ENCODE measurements at regions of chr2 and their contacts with region 1.

Region 1: GRCh38 chr2:131492418-131493198 is 411 bp upstream of the MZT2A start:
- DNase-seq: peak; percentile 93
- ATAC-seq: peak; percentile 84
- H3K4me3 ChIP-seq: peak overlapping the region; percentile 90
- H3K27ac ChIP-seq: peak overlapping the region; percentile 86
- H3K4me1 ChIP-seq: peaks cover 9% of the 10 kb centered on the region
- H3K27me3 ChIP-seq: no peaks in the 10 kb centered on the region
- CTCF ChIP-seq: peak; percentile 61 to 80 (median 77)
- EP300 ChIP-seq: no peak
- POLR2A ChIP-seq: peak; percentile 78
- RAD21 ChIP-seq: peak; percentile 48

Region 2: DNA sequence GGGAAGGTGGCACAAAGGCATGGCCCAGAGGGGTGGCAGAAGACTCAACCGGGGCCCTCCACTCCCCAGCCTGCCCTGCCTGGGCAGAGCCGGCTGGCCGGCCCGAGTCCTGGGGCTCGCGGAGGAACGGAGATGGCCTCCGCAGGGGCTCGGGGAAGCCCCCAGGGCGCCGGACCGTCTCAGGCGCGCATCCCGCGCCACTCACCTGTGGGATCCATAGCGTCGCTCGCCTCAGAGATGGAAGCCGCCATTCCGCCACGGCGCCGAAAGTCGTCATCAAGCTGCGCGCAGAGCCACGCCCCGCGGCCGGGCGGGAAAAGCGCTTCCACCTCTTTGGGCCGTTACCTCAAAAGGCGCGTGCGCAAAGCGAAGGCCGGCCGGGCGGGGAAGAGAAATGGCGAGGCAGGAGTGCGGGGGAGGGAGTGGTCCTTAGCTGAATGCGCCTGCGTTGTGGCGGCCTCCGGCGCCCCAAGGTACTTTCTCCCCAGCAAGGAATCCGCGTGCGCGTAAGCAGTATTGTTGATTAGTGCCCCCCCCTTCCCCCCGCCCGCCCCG is 1311.2 kb before region 1 on chr2 and contains the start of gene SMPD4:
- CTCF ChIA-PET with region 1: no interaction called
- POLR2A ChIA-PET with region 1: no interaction called
- RAD21 ChIA-PET with region 1: no interaction called
- SMC1A ChIA-PET with region 1: interaction called, 3 read pairs
- in situ Hi-C with region 1: loop called (anchors 5 kb)
- intact Hi-C with region 1: no loop called
- DNase-seq: peak; percentile 80
- ATAC-seq: peak; percentile 83
- H3K4me3 ChIP-seq: peak within 1 kb of the TSS; percentile 75
- H3K27ac ChIP-seq: peak within 1 kb of the TSS; percentile 80
- H3K4me1 ChIP-seq: no peaks in the 10 kb centered on the region; the same call in 1 of the 2 replicates
- H3K27me3 ChIP-seq: no peaks in the 10 kb centered on the region
- CTCF ChIP-seq: no peak
- EP300 ChIP-seq: no peak
- POLR2A ChIP-seq: peak; percentile 69
- RAD21 ChIP-seq: no peak
- polyA plus RNA-seq, gene SMPD4: 5.0 to 10.4 TPM

Region 3: GRCh38 chr2:130756053-130756873 is 736.3 kb before region 1 on chr2:
- CTCF ChIA-PET with region 1: no interaction called
- POLR2A ChIA-PET with region 1: no interaction called
- RAD21 ChIA-PET with region 1: no interaction called
- SMC1A ChIA-PET with region 1: no interaction called
- in situ Hi-C with region 1: no loop called
- intact Hi-C with region 1: no loop called
- DNase-seq: no peak
- ATAC-seq: peak; percentile 72
- H3K4me3 ChIP-seq: no peak overlapping the region
- H3K27ac ChIP-seq: no peak overlapping the region
- H3K4me1 ChIP-seq: no peaks in the 10 kb centered on the region
- H3K27me3 ChIP-seq: peaks cover 3 to 5% of the 10 kb centered on the region in 2 experiments
- CTCF ChIP-seq: no peak
- EP300 ChIP-seq: no peak
- POLR2A ChIP-seq: no peak
- RAD21 ChIP-seq: no peak

Region 4: GRCh38 chr2:131093006-131093695 is 399.5 kb before region 1 on chr2 and contains the start of gene FAM168B:
- CTCF ChIA-PET with region 1: no interaction called
- POLR2A ChIA-PET with region 1: no interaction called
- RAD21 ChIA-PET with region 1: no interaction called
- SMC1A ChIA-PET with region 1: no interaction called
- in situ Hi-C with region 1: no loop called
- intact Hi-C with region 1: loop called (anchors 10 kb)
- DNase-seq: peak; percentile 27
- ATAC-seq: peak; percentile 87
- H3K4me3 ChIP-seq: peak within 1 kb of the TSS; percentile 90
- H3K27ac ChIP-seq: peak within 1 kb of the TSS; percentile 89
- H3K4me1 ChIP-seq: peaks cover 3% of the 10 kb centered on the region; the same call in 1 of the 2 replicates
- H3K27me3 ChIP-seq: no peaks in the 10 kb centered on the region
- CTCF ChIP-seq: no peak
- EP300 ChIP-seq: no peak
- POLR2A ChIP-seq: peak; percentile 89
- RAD21 ChIP-seq: no peak
- polyA plus RNA-seq, gene FAM168B: 3.5 to 4.1 TPM

Region 5: GRCh38 chr2:131201098-131201497 is 291.5 kb before region 1 on chr2:
- CTCF ChIA-PET with region 1: no interaction called
- POLR2A ChIA-PET with region 1: no interaction called
- RAD21 ChIA-PET with region 1: no interaction called
- SMC1A ChIA-PET with region 1: no interaction called
- in situ Hi-C with region 1: no loop called
- intact Hi-C with region 1: no loop called
- DNase-seq: no peak
- ATAC-seq: no peak
- H3K4me3 ChIP-seq: no peak overlapping the region
- H3K27ac ChIP-seq: no peak overlapping the region
- H3K4me1 ChIP-seq: no peaks in the 10 kb centered on the region
- H3K27me3 ChIP-seq: no peaks in the 10 kb centered on the region; a peak in 1 of 4 replicates
- CTCF ChIP-seq: no peak
- EP300 ChIP-seq: no peak
- POLR2A ChIP-seq: no peak
- RAD21 ChIP-seq: no peak

Region 6: DNA sequence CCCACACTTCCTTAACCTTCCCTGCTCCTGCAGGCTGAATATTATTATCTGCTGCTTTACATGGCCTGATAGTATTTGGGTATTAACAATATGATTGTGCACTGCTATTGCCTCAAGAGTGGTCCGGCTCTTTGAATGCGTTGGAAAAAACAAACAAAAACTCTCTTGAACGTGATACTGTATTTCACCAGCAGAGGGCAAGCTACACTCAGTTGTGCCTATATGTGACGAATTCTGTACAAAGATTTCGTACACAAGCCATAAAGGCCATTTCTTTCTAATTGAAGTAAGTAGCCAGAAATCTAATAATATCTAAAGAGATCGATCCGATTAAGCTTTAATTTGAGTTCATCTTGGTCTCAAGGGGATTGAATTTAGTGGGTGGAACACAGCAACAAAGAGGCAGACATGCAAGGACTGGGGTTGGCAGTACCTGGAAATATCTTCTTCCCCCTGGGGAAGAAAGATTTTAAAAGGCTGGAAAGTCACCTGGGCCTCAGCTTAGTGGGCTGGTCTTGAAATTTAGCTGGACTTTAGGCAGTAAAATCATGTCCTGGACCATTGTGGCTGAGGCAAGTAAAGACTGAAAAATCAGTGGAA is 79.4 kb before region 1 on chr2:
- CTCF ChIA-PET with region 1: interaction called, 6 read pairs
- POLR2A ChIA-PET with region 1: no interaction called
- RAD21 ChIA-PET with region 1: interaction called, 4 read pairs
- SMC1A ChIA-PET with region 1: interaction called, 3 read pairs
- in situ Hi-C with region 1: no loop called
- intact Hi-C with region 1: loop called (anchors 1 kb)
- DNase-seq: peak; percentile 15
- ATAC-seq: peak; percentile 81
- H3K4me3 ChIP-seq: no peak overlapping the region
- H3K27ac ChIP-seq: no peak overlapping the region
- H3K4me1 ChIP-seq: no peaks in the 10 kb centered on the region
- H3K27me3 ChIP-seq: peaks cover 1 to 3% of the 10 kb centered on the region in 2 experiments; a peak in 1 of 4 replicates
- CTCF ChIP-seq: peak; percentile 65 to 87 (median 69)
- EP300 ChIP-seq: no peak
- POLR2A ChIP-seq: no peak
- RAD21 ChIP-seq: peak; percentile 91

Region 7: DNA sequence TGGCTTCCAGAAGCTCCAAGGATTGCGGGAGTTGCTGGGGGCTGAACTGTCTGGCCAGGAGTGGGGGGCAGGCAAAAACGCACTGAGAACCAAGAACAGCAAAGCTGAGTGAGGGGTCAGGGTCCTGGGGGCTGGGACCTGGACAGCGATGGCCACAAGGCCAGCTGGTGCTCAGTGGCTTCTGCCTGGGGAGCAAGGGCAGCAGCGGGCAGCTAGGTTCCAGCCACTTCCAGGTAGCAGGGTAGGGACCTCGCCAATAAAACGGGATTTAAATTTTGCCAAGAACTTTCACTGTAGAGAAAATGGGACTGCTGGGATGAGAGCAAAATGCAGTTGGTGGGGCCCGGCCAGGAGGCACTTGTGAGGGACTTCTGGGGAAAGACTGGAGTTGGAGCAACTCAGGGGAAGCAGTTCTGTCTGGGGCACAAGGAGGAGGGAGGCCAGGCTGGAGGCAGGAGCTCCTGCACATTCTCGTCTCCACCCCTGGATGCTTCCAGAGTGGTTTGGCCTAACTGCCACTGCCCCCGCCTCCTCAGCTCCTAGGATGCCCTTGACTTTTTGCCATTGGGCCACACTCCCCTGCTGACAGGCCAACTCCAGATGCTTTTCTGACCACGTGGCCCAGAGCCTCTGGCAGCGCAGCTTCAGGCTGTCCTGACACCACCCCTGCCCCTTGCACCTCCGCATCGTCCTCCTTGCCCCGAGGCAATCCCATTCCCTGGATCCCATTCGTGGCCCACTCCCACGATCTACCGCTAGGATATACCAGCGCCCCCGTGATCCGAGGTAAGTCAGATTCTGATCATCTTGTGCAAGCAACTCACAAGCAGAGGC is 29.6 kb after region 1 on chr2:
- CTCF ChIA-PET with region 1: interaction called, 25 read pairs
- POLR2A ChIA-PET with region 1: no interaction called
- RAD21 ChIA-PET with region 1: interaction called, 3 read pairs
- SMC1A ChIA-PET with region 1: interaction called, 3 read pairs
- in situ Hi-C with region 1: no loop called
- intact Hi-C with region 1: loop called (anchors 2 kb)
- DNase-seq: no peak
- ATAC-seq: peak; percentile 11; the same call in 1 of the 3 replicates
- H3K4me3 ChIP-seq: no peak overlapping the region
- H3K27ac ChIP-seq: no peak overlapping the region
- H3K4me1 ChIP-seq: no peaks in the 10 kb centered on the region
- H3K27me3 ChIP-seq: no peaks in the 10 kb centered on the region
- CTCF ChIP-seq: no peak
- EP300 ChIP-seq: no peak
- POLR2A ChIP-seq: no peak; the same call in 1 of the 2 replicates
- RAD21 ChIP-seq: no peak

Region 8: DNA sequence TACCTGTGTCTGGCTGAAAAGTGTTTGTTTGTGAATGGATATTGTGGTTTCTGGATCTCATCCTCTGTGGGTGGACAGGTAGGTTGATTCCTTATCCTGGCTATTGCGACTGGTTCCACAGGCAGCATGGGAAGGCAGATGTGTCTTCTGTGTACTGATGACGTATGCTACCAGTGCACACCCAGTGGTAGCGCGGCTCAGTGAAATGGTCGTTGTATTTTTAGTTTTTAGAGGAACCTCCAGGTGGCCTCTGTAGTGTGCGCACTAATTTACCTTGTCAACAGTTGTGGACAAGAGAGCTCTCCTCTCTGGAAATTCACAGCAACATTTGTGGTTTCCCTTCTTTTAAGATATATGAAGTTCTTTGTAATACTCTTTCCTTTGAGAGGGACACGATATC is 87.6 kb after region 1 on chr2:
- CTCF ChIA-PET with region 1: no interaction called
- POLR2A ChIA-PET with region 1: no interaction called
- RAD21 ChIA-PET with region 1: no interaction called
- SMC1A ChIA-PET with region 1: interaction called, 3 read pairs
- in situ Hi-C with region 1: no loop called
- intact Hi-C with region 1: loop called (anchors 5 kb)
- DNase-seq: no peak
- ATAC-seq: peak; percentile 72
- H3K4me3 ChIP-seq: no peak overlapping the region
- H3K27ac ChIP-seq: peak overlapping the region; percentile 80
- H3K4me1 ChIP-seq: peaks cover 67% of the 10 kb centered on the region
- H3K27me3 ChIP-seq: no peaks in the 10 kb centered on the region
- CTCF ChIP-seq: 0 out of 6 replicates have a peak, but pooled peaks of 1 of the 3 experiments have one; percentile 2
- EP300 ChIP-seq: no peak
- POLR2A ChIP-seq: no peak
- RAD21 ChIP-seq: peak; percentile 21; the same call in 1 of the 2 replicates

Region 9: DNA sequence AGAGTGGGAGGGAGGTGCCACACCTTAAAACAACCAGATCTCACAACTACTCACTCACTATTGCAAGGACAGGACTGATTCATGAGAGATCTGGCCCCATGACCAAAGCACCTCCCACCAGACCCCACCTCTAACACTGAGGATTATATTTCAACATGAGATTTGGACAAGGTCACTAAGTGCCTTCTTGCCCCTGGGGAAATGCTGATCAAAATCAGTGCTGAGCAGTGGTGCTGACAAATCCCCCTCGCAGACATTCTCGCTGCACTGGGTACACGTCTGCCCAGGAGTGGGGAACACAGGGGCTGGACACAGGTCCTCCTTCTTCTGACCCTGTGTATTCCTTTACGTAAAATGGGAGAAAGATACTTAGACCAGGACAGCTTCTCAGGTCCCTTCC is 324.2 kb after region 1 on chr2:
- CTCF ChIA-PET with region 1: no interaction called
- POLR2A ChIA-PET with region 1: no interaction called
- RAD21 ChIA-PET with region 1: no interaction called
- SMC1A ChIA-PET with region 1: no interaction called
- in situ Hi-C with region 1: no loop called
- intact Hi-C with region 1: no loop called
- DNase-seq: no peak
- ATAC-seq: no peak
- H3K4me3 ChIP-seq: no peak overlapping the region
- H3K27ac ChIP-seq: no peak overlapping the region
- H3K4me1 ChIP-seq: no peaks in the 10 kb centered on the region
- H3K27me3 ChIP-seq: no peaks in the 10 kb centered on the region
- CTCF ChIP-seq: no peak
- EP300 ChIP-seq: no peak
- POLR2A ChIP-seq: no peak
- RAD21 ChIP-seq: no peak